ENCODE measurements at regions of chr11 and their contacts with region 1.

Region 1: GRCh38 chr11:63974259-63975143 is at the start of gene COX8A:
- DNase-seq: peak; percentile 85
- ATAC-seq: peak; percentile 99
- H3K4me3 Mint-ChIP-seq: peak within 1 kb of the TSS; percentile 99
- H3K27ac Mint-ChIP-seq: peak within 1 kb of the TSS; percentile 99
- H3K4me1 Mint-ChIP-seq: peaks cover 24% of the 10 kb centered on the region
- H3K27me3 Mint-ChIP-seq: peaks cover under 1% of the 10 kb centered on the region
- total RNA-seq, gene COX8A: 379 to 420 TPM

Region 2: DNA sequence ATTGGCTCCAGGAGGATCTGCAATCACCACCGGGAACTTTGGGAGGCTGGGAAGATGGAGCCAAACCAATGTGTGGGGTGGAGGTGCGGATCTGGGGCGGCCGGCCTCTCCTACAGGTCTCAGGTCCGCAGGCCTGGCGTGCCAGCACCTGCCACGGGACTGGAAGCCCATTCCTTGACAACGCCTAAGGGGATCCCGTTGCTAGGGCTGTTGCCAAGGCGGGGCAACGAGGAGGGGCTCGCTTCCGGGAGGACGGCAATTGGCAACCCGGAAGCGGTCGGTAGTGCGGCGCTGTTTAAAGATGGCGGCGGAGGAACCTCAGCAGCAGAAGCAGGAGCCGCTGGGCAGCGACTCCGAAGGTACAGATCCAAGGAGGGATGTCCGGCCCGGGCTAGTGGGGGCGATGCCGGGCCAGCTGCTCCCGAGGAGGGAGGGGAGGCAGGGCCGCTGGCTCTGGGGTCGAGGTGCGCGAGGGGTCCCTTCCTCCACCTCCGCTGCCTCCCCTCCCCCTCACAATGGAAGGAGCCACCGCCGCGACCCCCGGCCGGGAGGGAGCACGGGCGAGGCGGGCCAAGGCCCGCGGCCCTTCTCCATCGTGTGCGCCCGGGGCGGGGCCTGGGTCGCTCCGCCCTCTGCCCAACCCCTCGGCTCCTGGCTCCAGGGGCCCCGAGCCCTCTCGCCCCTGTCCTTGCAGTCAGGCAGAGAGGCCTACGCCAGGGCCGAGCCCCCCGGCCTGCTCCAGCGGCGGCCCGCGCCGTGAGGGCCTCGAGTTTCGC is 11.8 kb after region 1 on chr11 and contains the start of gene OTUB1:
- POLR2A ChIA-PET with region 1: interaction called, 10 read pairs
- DNase-seq: peak; percentile 88
- ATAC-seq: peak; percentile 84
- H3K4me3 Mint-ChIP-seq: peak within 1 kb of the TSS; percentile 95
- H3K27ac Mint-ChIP-seq: peak within 1 kb of the TSS; percentile 97
- H3K4me1 Mint-ChIP-seq: peaks cover 25% of the 10 kb centered on the region
- H3K27me3 Mint-ChIP-seq: no peaks in the 10 kb centered on the region
- total RNA-seq, gene OTUB1: 86.0 to 87.0 TPM